Left cardiac atrium (tissue), 4 donors: ENCODE measurements at regions of chr1 and their contacts with region 1.

Region 1: DNA sequence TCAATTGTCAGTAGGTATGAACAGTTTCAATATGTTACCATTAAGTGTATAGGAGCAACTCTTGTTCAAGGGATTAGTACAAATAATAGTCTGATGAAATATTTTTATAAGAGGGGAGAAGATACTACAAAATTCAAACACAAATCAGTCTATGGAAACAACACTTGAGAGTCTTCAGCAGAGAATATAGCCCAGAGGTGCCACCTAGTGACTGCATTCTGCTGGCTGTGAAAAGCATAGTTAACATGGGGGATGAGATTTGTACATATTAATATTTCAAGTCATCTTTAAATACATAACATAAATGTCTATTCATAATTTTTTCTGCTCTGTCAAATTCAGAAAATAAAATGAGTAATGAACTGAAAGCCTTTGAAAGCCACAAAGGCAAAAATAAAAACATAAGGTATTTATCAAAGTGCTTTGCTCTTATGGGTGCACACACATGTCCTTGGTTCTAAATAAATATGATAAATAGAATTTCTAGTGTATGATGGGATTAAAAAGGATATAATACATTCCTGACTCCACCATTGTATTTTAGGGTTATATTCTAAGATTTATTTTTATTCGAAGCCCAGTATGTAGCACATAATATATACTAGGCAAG is 440.9 kb upstream of the ZRANB2 start:
- DNase-seq: peak; percentile 26
- ATAC-seq: peak in 1 of 2 donors; percentile 45

Region 2: GRCh38 chr1:71094913-71095312 is 426.8 kb before region 1 on chr1:
- intact Hi-C with region 1: loop called in 1 of 2 experiments (anchors 5 kb)
- DNase-seq: no peak
- ATAC-seq: no peak

Region 3: GRCh38 chr1:71196685-71197084 is 325.1 kb before region 1 on chr1:
- intact Hi-C with region 1: loop called in 1 of 2 experiments (anchors 5 kb)
- DNase-seq: no peak
- ATAC-seq: peak in 1 of 2 donors; percentile 65